Motor neuron (in vitro differentiated cells): ENCODE measurements at regions of chr11 and their contacts with region 1.

Region 1: GRCh38 chr11:118689851-118690552 is 10.6 kb upstream of the TREH start:
- ATAC-seq: peak; percentile 88 to 95 (median 91)
- H3K4me3 ChIP-seq: peak overlapping the region in 4 of 5 donors; percentile 8 to 18 (median 12)
- H3K27ac ChIP-seq: no peak overlapping the region
- H3K4me1 ChIP-seq: peaks cover 4 to 6% of the 10 kb centered on the region in 2 donors

Region 2: GRCh38 chr11:118928108-118928870 is 238.3 kb after region 1 on chr11:
- in situ Hi-C with region 1: loop called in 1 of 9 experiments (anchors 25 kb)
- ATAC-seq: peak; percentile 63 to 72 (median 68)
- H3K4me3 ChIP-seq: peak overlapping the region; percentile 53 to 100 (median 86)
- H3K27ac ChIP-seq: peak overlapping the region; percentile 81 to 91
- H3K4me1 ChIP-seq: peaks cover 22 to 26% of the 10 kb centered on the region in 2 donors

Region 3: DNA sequence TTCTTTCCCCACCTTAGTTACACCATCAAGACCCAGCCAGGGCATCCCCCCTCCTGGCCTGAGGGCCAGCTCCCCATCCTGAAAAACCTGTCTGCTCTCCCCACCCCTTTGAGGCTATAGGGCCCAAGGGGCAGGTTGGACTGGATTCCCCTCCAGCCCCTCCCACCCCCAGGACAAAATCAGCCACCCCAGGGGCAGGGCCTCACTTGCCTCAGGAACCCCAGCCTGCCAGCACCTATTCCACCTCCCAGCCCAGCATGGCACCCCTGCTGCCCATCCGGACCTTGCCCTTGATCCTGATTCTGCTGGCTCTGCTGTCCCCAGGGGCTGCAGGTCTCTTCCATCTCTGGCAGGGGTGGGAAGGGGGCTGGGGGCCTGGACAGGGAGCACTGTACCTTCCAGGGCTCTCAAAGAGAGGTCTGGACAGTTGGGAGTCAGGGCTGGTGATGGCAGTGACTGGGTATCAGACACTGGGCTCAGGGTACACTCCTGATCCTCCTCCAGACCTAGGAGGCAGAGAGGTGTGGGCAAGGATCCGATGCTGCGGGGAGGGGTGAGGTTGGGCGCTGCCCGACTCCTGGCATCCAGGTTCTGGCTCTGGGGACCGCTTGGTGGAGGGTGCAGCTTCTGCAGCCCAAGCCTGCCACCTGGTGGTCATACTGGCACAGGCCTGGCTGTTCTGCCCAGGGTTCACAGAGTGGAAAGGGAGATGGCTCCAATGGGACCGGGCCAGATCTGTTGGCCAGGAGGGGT is 266.3 kb after region 1 on chr11 and contains the start of gene UPK2:
- in situ Hi-C with region 1: loop called in 6 of 9 experiments (anchors 10 to 25 kb)
- ATAC-seq: peak; percentile 80 to 99 (median 86)
- H3K4me3 ChIP-seq: no peak within 1 kb of the TSS
- H3K27ac ChIP-seq: no peak within 1 kb of the TSS
- H3K4me1 ChIP-seq: peaks cover 17 to 27% of the 10 kb centered on the region in 2 donors
- total RNA-seq, gene UPK2: 0.29 to 1.00 (median 0.45) TPM in 5 of 8 experiments, not detected in the others

Region 4: GRCh38 chr11:119315131-119316015 is 625.4 kb after region 1 on chr11:
- in situ Hi-C with region 1: no loop called
- ATAC-seq: peak in 4 of 8 experiments; percentile 7 to 30 (median 16)
- H3K4me3 ChIP-seq: peak overlapping the region; percentile 32 to 81 (median 38)
- H3K27ac ChIP-seq: no peak overlapping the region
- H3K4me1 ChIP-seq: peaks cover 40 to 44% of the 10 kb centered on the region in 2 donors